CD4-positive, alpha-beta T cell (primary cell): ENCODE measurements at regions of chr1 and their contacts with region 1.

Region 1: DNA sequence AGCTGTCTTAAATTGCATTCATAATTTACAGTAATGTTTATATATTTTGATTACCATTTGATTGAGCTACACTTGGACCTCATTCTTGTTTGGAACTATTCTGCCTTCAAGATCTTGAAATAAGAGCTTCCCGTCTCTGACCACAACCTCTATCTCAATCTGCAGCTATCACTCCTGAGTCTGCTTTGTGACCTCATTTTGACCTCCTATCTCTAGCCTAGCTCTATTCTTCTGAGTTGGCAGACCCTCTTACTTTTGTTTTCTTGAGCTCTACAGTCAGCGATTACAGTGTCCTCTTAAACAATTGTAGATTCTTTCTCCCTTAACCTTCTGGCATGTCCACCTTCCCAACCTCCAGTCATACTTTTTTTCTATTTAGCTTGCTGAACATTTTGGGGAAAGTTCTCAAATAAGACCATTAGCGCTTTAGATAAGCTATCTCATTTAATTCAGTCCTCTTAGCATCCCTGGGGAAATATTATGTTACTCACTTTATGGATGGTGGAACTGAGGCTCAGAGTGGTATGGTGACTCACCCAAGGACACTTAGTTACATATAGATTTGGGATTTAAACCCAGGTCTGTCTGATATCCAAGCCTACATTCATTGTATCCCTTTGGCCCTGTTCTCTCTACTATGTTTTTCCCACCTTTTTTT is 19.1 kb downstream of the RPAP2 start:
- DNase-seq: peak in 4 of 14 experiments; percentile 11 to 72 (median 60)
- ATAC-seq: peak; percentile 39
- H3K4me3 ChIP-seq: no peak overlapping the region
- H3K4me3 Mint-ChIP-seq: peak overlapping the region; percentile 30
- H3K27ac ChIP-seq: peak overlapping the region in 1 of 2 donors; percentile 40
- H3K27ac Mint-ChIP-seq: peak overlapping the region; percentile 85
- H3K4me1 ChIP-seq: peaks cover 38% of the 10 kb centered on the region
- H3K4me1 Mint-ChIP-seq: peaks cover 59% of the 10 kb centered on the region
- H3K27me3 ChIP-seq: no peaks in the 10 kb centered on the region
- H3K27me3 Mint-ChIP-seq: no peaks in the 10 kb centered on the region
- CTCF ChIP-seq: no peak

Region 2: DNA sequence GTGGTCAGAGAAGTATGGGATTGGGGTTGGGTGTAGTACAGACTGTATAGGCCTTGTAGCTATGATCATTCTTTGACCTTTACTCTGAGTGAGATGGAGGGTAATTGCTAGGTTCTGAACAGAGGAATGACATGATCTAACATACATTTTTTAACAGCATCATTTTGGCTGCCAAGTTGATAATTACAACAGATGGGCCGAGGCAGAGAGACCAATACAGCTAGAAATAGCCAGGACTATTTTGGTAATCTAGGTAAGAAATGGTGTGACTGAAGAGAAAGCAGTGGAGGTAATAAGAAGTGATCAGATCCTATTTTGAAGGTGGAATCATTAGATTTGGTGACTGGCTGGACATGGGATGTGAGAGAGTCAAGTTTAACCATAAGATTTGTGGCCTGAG is 24.4 kb after region 1 on chr1:
- CTCF ChIA-PET with region 1: no interaction called
- POLR2A ChIA-PET with region 1: no interaction called
- intact Hi-C with region 1: loop called in 1 of 2 experiments (anchors 2 kb)
- DNase-seq: no peak
- ATAC-seq: no peak
- H3K4me3 ChIP-seq: no peak overlapping the region
- H3K4me3 Mint-ChIP-seq: no peak overlapping the region
- H3K27ac ChIP-seq: no peak overlapping the region
- H3K27ac Mint-ChIP-seq: no peak overlapping the region
- H3K4me1 ChIP-seq: no peaks in the 10 kb centered on the region
- H3K4me1 Mint-ChIP-seq: peaks cover 6% of the 10 kb centered on the region
- H3K27me3 ChIP-seq: no peaks in the 10 kb centered on the region
- H3K27me3 Mint-ChIP-seq: no peaks in the 10 kb centered on the region
- CTCF ChIP-seq: no peak